ENCODE measurements at regions of chr2 and their contacts with region 1.

Region 1: DNA sequence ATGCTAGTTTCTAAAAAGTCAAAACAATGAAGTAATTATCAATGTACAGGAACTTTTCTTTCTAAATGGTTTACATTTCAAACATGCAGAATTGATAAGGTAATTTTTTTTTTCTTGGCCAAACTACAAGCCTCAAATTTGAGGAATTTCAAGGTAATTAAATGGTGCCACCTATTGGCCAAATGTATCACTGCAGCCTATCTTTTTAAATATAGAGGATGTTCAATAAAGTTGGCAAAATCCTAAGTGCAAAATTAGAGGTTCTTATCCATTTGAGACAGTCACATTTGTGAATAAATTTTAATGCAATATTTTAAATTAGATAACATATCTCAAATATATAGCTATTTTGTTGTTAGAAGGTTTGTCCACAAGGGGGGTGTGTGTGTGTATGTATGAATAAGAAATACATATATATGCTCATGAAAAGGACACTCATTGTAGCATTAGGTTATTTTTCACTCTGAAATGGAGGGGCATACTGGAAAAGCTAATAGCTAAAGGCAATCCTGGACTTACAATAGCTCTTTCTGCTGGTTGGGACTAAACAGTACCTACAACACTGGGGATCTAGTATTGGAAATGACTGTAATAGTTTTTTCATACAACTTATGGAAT is 26.2 kb downstream of the MMADHC start:
- DNase-seq: peak; percentile 81
- H3K4me3 Mint-ChIP-seq: no peak overlapping the region
- H3K27ac Mint-ChIP-seq: no peak overlapping the region
- H3K4me1 Mint-ChIP-seq: no peaks in the 10 kb centered on the region
- H3K27me3 Mint-ChIP-seq: peaks cover 5% of the 10 kb centered on the region

Region 2: DNA sequence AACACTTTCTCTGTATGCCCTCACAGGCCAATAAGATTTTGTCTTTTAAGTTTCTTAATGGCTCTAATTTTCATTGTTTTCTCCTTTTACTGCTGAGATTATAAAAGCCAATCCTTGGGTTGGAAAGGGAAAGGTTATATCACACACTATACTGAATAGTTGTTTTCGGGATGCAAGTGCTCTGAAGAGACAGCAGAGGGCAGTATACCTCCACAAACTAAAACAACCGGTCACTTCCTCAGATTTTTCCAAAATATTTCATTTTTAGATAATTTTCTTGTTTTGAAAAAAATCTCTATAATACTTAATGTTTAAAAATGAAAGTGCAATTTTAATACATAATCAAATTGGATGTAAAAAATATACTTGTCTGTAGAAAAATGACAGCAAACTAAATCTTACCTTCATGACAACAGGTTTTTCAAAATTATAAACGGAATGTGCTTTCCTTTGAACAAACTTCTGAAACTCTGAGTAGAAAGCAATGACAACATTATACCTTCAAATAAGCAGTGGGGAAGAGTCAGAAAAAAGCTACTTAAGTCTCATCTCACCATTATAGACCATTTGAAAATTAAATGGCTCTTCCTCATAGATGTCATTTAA is 1623.6 kb before region 1 on chr2:
- intact Hi-C with region 1: loop called (anchors 5 kb)
- DNase-seq: no peak
- H3K4me3 Mint-ChIP-seq: no peak overlapping the region
- H3K27ac Mint-ChIP-seq: no peak overlapping the region
- H3K4me1 Mint-ChIP-seq: peaks cover 2% of the 10 kb centered on the region
- H3K27me3 Mint-ChIP-seq: no peaks in the 10 kb centered on the region

Region 3: DNA sequence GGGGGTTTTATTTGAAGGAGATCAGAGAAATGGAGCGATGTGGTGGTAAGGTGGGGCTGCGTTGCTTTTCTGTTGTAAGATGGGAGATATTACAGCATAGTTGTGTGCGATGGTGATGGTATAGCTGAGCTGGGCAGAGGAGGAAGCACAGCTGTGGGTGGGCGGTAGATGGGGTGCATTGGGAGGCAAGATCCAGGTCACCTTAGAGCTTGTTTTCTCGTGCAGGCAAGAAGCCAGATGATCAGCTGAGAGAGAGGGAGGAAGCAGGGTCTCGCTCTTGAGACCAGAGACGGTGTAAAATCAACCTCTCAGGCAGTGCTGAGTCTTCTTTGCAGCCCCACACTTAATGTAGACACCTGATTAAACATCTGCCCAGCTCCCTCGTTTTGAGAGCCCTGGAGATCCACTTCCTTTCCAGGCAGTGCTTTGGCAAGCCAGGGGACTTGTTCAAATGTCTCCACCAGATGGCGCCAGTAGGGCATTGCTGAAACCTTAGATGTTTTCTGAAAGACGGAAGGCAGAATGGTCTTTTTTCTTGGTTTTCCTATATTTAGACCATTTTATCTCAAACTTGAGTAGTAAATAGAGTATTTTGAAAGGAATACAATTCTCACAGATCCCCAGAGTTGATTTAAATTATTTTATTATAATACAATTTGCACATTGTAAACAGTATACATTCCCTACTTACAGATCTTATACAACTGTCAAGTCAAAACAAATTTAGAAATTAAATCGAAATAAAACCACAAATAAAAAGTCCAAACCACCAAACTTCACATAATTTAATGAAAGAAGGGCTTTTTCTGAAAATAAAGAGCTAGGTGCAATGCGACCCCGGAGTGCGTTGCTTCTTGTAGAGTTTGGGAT is 544.1 kb before region 1 on chr2:
- intact Hi-C with region 1: loop called (anchors 1 kb)
- DNase-seq: peak; percentile 92
- H3K4me3 Mint-ChIP-seq: no peak overlapping the region
- H3K27ac Mint-ChIP-seq: no peak overlapping the region
- H3K4me1 Mint-ChIP-seq: peaks cover 6% of the 10 kb centered on the region
- H3K27me3 Mint-ChIP-seq: no peaks in the 10 kb centered on the region

Region 4: GRCh38 chr2:149040451-149040850 is 521.0 kb before region 1 on chr2:
- intact Hi-C with region 1: loop called (anchors 5 kb)
- DNase-seq: peak; percentile 79
- H3K4me3 Mint-ChIP-seq: no peak overlapping the region
- H3K27ac Mint-ChIP-seq: no peak overlapping the region
- H3K4me1 Mint-ChIP-seq: no peaks in the 10 kb centered on the region
- H3K27me3 Mint-ChIP-seq: peaks cover 70% of the 10 kb centered on the region

Region 5: GRCh38 chr2:149313512-149313972 is 247.9 kb before region 1 on chr2:
- intact Hi-C with region 1: loop called (anchors 10 kb)
- DNase-seq: peak; percentile 58
- H3K4me3 Mint-ChIP-seq: no peak overlapping the region
- H3K27ac Mint-ChIP-seq: no peak overlapping the region
- H3K4me1 Mint-ChIP-seq: no peaks in the 10 kb centered on the region
- H3K27me3 Mint-ChIP-seq: peaks cover 6% of the 10 kb centered on the region

Region 6: DNA sequence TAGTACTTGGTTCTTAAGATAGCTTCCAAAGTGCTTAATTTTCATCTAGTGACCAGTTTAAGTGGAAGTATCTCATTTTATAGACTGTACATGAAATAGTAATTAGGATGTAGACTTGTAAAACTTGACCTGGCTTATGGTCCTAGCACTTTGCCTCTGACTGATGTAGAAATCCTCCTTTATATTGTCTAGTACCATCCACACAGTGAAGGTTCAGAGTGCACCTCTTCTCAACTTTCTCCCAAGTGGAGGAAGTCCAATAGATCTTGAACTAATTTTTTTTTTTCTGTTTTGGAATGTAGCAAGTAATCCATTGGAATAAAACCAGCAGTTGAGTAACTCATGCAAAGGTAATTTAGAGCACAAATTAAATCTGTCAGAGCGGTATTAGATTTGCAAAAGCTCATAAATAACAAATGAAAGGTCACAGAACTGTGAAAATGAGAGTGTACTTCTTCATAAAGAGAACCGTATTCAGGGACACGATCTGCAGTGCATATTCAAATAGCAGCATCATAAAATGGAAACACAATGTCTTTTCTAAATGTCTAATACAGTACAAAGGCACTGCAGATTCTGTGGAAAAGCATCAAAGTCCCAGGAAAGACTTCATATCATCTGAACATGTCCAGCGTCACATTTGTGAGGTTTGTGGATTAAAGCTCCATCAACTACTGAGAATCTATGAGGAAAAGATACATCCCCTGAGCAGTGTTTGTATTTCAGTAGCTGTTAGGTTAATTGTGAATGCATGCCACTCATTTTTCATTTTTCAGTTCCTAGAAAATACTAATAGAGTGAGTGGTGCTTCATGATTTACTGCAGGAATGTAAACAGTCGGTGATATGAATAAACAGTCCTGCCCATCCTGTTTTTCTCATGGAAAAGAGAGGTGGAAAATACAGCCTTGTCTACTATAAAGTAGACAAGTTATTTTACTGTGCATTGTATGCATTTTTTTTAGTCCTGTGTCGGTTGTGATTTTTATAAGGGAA is 130.4 kb before region 1 on chr2:
- intact Hi-C with region 1: loop called (anchors 10 kb)
- DNase-seq: no peak
- H3K4me3 Mint-ChIP-seq: no peak overlapping the region
- H3K27ac Mint-ChIP-seq: no peak overlapping the region
- H3K4me1 Mint-ChIP-seq: no peaks in the 10 kb centered on the region
- H3K27me3 Mint-ChIP-seq: no peaks in the 10 kb centered on the region

Region 7: DNA sequence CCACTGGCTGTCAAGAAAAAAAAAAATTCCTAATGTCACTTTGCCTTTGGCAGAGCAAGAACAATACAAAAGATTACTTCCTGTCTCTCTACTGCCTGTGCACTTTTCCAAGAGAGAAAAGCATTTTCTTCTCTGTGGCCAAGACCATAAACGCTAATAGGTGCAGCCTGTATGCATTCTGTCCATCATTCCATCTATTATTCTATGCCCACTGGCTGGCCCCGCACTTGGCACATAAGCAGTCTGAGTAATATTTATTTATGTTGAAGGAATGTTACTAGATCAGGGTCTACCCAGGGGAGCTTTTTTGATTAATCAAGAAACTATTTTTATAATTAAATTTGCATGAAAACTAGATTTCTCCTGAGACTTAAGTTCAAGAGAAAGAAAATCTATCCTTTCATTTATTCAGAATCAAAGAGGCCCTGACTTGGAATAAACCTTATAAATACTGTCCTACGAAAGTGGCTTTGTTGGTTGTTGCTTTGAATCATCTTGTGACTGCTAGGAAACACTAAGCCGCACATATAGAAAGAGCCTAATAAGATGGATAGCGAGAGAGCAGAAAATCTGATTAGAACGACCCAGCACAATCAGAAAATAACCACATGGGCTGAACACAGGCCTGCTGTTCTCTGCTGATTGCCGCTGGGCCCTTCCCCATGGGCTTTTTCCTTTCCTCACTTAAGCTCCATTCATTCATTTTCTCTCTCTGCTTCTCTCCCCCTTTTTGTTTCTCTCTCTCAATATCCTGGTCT is 33.2 kb before region 1 on chr2:
- intact Hi-C with region 1: no loop called
- DNase-seq: no peak
- H3K4me3 Mint-ChIP-seq: no peak overlapping the region
- H3K27ac Mint-ChIP-seq: no peak overlapping the region
- H3K4me1 Mint-ChIP-seq: no peaks in the 10 kb centered on the region
- H3K27me3 Mint-ChIP-seq: peaks cover 12% of the 10 kb centered on the region

Region 8: GRCh38 chr2:149729575-149729974 is 168.2 kb after region 1 on chr2:
- intact Hi-C with region 1: no loop called
- DNase-seq: no peak
- H3K4me3 Mint-ChIP-seq: no peak overlapping the region
- H3K27ac Mint-ChIP-seq: no peak overlapping the region
- H3K4me1 Mint-ChIP-seq: no peaks in the 10 kb centered on the region
- H3K27me3 Mint-ChIP-seq: no peaks in the 10 kb centered on the region

Measured in activated CD4-positive, alpha-beta T cell treated with anti-CD3 and anti-CD28 coated beads, Interleukin-2, amount 10 ng/mL, durations not matched to agents 24 days and 14 days (primary cell).